ENCODE measurements at regions of chr16 and their contacts with region 1.

Region 1: GRCh38 chr16:7624871-7625766 is 292.5 kb downstream of the RBFOX1 start:
- DNase-seq: no peak
- ATAC-seq: no peak

Region 2: GRCh38 chr16:7405166-7405852 is 219.8 kb before region 1 on chr16:
- intact Hi-C with region 1: loop called (anchors 10 kb)
- DNase-seq: peak; percentile 70
- ATAC-seq: peak; percentile 94